PC-3 (cell line): ENCODE measurements at regions of chr10 and their contacts with region 1.

Region 1: DNA sequence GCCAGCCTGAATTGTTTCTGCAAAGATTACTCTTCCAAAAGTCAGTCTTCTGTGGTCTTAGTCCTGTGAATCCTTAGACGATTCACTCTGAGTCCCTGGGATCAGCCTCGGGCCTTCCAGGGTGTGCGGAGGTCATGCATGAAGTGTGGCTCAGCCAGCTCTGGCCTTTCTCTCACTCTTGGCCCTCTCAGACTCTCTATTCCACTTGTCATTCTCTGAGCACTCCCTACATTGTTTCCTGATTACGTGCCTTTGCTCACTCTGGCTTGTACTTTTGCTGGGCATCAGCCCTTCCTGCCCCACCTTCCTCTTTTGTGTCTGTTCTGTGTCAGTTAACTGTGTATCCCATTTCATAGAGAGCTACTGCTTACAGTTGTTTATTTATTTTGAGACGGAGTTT is 36.0 kb downstream of the CCNY start:
- DNase-seq: peak; percentile 100
- ATAC-seq: peak; percentile 99
- H3K4me3 ChIP-seq: peak overlapping the region; percentile 8; the same call in 1 of the 2 replicates
- H3K27ac ChIP-seq: peak overlapping the region; percentile 76
- H3K4me1 ChIP-seq: peaks cover 31% of the 10 kb centered on the region
- H3K27me3 ChIP-seq: no peaks in the 10 kb centered on the region
- CTCF ChIP-seq: no peak

Region 2: GRCh38 chr10:34584164-34584563 is 788.2 kb before region 1 on chr10:
- CTCF ChIA-PET with region 1: no interaction called
- POLR2A ChIA-PET with region 1: no interaction called
- intact Hi-C with region 1: no loop called
- DNase-seq: peak; percentile 72
- ATAC-seq: no peak
- H3K4me3 ChIP-seq: no peak overlapping the region
- H3K27ac ChIP-seq: no peak overlapping the region
- H3K4me1 ChIP-seq: peaks cover 74% of the 10 kb centered on the region
- H3K27me3 ChIP-seq: no peaks in the 10 kb centered on the region
- CTCF ChIP-seq: no peak

Region 3: GRCh38 chr10:35246770-35247343 is 125.5 kb before region 1 on chr10:
- CTCF ChIA-PET with region 1: no interaction called
- POLR2A ChIA-PET with region 1: no interaction called
- intact Hi-C with region 1: no loop called
- DNase-seq: no peak
- ATAC-seq: no peak
- H3K4me3 ChIP-seq: no peak overlapping the region
- H3K27ac ChIP-seq: no peak overlapping the region
- H3K4me1 ChIP-seq: peaks cover 8% of the 10 kb centered on the region
- H3K27me3 ChIP-seq: no peaks in the 10 kb centered on the region
- CTCF ChIP-seq: no peak

Region 4: DNA sequence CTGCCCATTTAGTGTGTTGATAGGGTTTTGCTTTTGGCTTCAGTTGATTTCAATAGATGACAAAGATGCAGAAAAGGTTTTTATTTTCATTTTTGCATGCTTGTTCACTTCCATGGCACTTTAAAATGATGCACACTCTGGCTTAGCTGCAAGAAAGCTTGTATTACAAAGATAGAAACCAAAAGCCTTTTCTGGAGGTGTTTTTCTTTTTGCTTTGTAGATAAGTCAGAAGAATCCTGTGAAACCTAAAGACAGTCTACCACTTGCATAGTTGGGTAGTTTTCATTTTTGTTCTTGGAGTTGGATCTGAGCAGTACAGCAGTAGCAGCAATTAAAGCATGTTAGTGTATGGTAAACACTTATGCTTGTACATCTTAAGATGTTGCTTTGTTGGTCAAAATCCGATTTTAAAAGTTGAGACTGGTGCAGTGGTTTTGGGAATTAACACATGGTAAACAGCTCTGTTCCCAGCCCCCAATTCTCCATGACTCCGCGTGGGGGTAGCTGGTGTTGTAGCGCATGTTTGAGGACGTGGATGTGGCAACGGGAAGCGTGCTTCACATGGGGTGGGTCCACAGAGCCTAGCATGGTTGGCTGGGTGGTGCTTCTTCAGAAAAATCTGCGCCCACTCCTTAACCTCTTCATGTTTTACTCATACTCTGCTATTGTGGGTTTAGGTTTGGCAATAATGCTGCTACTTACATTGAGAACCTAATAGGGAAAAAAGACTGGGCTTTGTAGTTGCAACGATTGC is 16.2 kb before region 1 on chr10:
- CTCF ChIA-PET with region 1: no interaction called
- POLR2A ChIA-PET with region 1: no interaction called
- intact Hi-C with region 1: loop called (anchors 2 kb)
- DNase-seq: no peak
- ATAC-seq: no peak
- H3K4me3 ChIP-seq: no peak overlapping the region
- H3K27ac ChIP-seq: no peak overlapping the region
- H3K4me1 ChIP-seq: no peaks in the 10 kb centered on the region; the same call in 1 of the 2 replicates
- H3K27me3 ChIP-seq: no peaks in the 10 kb centered on the region
- CTCF ChIP-seq: no peak

Region 5: GRCh38 chr10:35421553-35422178 is 49.3 kb after region 1 on chr10:
- CTCF ChIA-PET with region 1: interaction called, 3 read pairs
- POLR2A ChIA-PET with region 1: no interaction called
- intact Hi-C with region 1: loop called (anchors 1 kb)
- DNase-seq: peak; percentile 99
- ATAC-seq: peak; percentile 90
- H3K4me3 ChIP-seq: peak overlapping the region; percentile 37; the same call in 1 of the 2 replicates
- H3K27ac ChIP-seq: peak overlapping the region; percentile 62
- H3K4me1 ChIP-seq: peaks cover 63% of the 10 kb centered on the region
- H3K27me3 ChIP-seq: no peaks in the 10 kb centered on the region
- CTCF ChIP-seq: no peak

Region 6: DNA sequence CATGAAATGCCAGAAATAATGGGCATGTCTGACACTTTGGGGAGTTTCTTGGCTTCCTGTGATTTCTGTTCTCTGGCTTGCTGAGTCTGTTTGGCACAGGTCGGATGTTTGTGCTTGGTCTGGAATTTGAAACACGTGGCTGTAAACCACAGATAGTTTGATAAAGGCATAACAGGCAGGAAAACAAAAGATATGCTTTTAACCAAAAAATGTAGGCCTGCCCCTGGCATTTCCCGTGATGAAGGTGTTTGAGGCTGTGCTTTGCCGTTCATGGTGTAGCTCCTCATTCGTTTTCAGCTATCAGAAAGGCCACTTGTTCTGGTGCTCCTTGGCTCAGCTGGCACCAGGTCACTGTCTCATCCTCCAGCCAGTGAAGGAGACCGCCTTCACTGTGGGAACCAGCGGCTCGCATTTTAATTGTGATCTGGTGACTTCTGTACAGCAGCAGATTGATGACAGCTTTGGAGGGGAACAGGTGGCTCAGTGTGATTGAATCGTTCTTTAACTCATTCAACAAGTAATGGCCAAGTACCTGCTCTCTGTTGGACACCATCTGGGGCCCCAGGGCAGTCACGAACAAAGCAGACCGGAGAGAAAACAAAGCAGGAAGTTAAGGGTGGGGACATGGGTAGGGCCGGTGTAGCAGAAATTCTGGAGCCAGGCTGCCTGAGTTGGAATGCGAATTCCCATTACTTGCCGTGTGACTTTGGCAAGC is 75.5 kb after region 1 on chr10:
- CTCF ChIA-PET with region 1: no interaction called
- POLR2A ChIA-PET with region 1: interaction called, 16 read pairs
- intact Hi-C with region 1: loop called (anchors 1 kb)
- DNase-seq: peak; percentile 91
- ATAC-seq: peak; percentile 77
- H3K4me3 ChIP-seq: peak overlapping the region; percentile 13
- H3K27ac ChIP-seq: peak overlapping the region; percentile 23
- H3K4me1 ChIP-seq: peaks cover 24% of the 10 kb centered on the region
- H3K27me3 ChIP-seq: no peaks in the 10 kb centered on the region
- CTCF ChIP-seq: no peak

Region 7: DNA sequence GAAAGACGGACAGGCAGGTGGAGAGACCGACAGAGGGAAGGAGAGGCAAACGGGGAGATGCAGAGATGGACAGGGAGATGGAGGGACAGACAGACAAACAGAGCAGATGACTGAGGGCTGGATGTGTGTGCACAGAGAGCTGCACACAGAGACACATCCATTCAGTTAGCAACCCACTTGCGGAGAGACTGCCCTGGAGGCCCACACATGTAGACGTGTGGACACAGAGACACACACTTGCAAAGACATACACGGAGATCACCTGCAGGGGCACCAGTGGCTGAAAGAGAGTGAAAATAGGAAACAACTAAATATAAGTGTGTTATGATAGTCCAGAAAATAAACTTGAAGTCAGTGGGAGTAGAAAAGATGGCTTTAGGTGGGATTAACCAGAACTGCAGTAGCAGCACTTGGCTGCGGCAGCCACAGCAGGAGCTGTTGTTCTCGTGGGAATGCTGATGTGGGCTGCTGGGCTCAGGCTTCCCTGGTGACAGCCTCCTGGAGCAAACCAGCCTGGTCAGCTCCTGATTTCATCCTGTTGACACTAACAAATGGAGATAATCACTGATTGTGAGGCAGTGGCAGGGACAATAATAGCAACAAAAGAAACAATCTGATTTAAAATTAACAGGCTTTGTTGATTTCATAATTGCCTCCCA is 98.1 kb after region 1 on chr10:
- CTCF ChIA-PET with region 1: no interaction called
- POLR2A ChIA-PET with region 1: no interaction called
- intact Hi-C with region 1: no loop called
- DNase-seq: no peak
- ATAC-seq: no peak
- H3K4me3 ChIP-seq: no peak overlapping the region
- H3K27ac ChIP-seq: no peak overlapping the region
- H3K4me1 ChIP-seq: no peaks in the 10 kb centered on the region
- H3K27me3 ChIP-seq: no peaks in the 10 kb centered on the region
- CTCF ChIP-seq: no peak